Adrenal gland (tissue), 19 donors: ENCODE measurements at regions of chr21 and their contacts with region 1.

Region 1: DNA sequence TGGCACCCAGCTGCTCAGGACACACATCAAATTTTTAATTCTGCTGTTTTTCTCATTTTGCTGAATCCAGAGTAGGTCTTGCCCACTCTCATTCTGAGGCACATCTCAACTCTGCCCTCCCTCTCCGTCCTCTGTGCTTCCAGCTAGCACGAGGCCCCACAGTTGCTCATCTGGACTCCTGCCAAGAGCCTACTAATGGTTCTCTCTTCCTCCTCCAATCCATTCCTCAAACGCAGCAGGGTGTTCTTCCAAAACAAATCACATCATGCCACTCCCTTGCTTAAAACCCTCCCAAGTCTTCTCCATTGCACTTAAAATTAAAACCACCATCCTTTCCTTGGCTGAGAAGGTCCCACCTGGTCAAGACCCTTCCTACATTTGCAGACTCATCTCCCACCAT is 49.8 kb upstream of the SCAF4 start:
- DNase-seq: peak; percentile 33 to 65 (median 57)
- H3K4me3 ChIP-seq: no peak overlapping the region
- H3K27ac ChIP-seq: no peak overlapping the region
- H3K4me1 ChIP-seq: no peaks in the 10 kb centered on the region
- H3K27me3 ChIP-seq: no peaks in the 10 kb centered on the region
- CTCF ChIP-seq: no peak
- POLR2A ChIP-seq: no peak

Region 2: DNA sequence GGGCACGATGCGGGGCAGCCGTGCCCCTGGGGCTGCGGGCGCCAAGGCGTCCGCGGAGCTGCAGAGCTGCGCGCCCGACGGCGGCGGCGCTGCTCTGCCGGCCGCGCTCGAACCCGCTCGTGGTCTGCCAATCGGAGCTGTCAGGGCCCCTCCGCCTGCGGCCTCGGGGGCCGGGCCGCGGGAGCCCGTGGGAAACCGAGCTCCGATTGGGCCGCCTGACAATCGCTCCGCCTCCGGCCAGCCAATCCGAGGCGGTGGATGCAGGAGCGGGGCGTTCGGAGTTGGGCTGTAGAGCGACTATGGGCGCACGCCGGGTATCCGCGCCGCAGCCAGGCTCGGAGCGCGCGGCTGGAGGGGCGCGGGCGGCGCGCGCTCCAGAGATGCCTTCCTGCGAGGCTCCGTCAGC is 222.8 kb before region 1 on chr21:
- intact Hi-C with region 1: no loop called
- DNase-seq: peak; percentile 71 to 92 (median 77)
- H3K4me3 ChIP-seq: peak overlapping the region in 1 of 4 donors; percentile 59
- H3K27ac ChIP-seq: no peak overlapping the region
- H3K4me1 ChIP-seq: peaks cover 0 to 7% of the 10 kb centered on the region in 2 donors
- H3K27me3 ChIP-seq: peaks cover 42% of the 10 kb centered on the region
- CTCF ChIP-seq: no peak
- POLR2A ChIP-seq: no peak

Region 3: GRCh38 chr21:31744182-31744800 is 37.4 kb before region 1 on chr21:
- intact Hi-C with region 1: no loop called
- DNase-seq: no peak
- H3K4me3 ChIP-seq: no peak overlapping the region
- H3K27ac ChIP-seq: no peak overlapping the region
- H3K4me1 ChIP-seq: no peaks in the 10 kb centered on the region
- H3K27me3 ChIP-seq: no peaks in the 10 kb centered on the region
- CTCF ChIP-seq: no peak
- POLR2A ChIP-seq: no peak

Region 4: DNA sequence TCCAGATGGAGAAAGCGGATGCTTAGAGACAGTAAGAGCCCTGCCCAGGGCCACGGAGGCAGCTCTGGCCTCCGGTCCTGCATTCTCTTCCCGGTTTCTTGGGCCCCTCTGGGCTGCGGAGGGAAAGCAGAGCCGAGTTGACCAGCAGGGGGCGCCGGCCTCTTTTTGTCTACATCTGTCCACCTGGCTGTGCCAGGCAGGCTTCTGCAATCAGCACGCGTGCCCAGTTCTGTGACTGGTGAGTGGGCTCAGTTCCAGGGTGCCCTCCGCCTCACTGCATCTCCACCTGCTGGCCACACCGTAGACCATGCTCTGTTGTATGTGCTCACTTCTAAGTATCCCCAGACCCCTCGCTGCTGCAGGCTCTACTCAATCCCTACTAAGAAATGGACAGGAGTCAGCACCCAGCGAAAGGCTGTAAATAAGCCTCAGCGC is 84.4 kb after region 1 on chr21:
- intact Hi-C with region 1: loop called in 1 of 2 experiments (anchors 10 kb)
- DNase-seq: peak; percentile 82 to 95 (median 92)
- H3K4me3 ChIP-seq: no peak overlapping the region
- H3K27ac ChIP-seq: no peak overlapping the region
- H3K4me1 ChIP-seq: no peaks in the 10 kb centered on the region
- H3K27me3 ChIP-seq: peaks cover 3% of the 10 kb centered on the region
- CTCF ChIP-seq: peak; percentile 66 to 87 (median 81)
- POLR2A ChIP-seq: no peak